ENCODE measurements at regions of chr3 and their contacts with region 1.

Region 1: DNA sequence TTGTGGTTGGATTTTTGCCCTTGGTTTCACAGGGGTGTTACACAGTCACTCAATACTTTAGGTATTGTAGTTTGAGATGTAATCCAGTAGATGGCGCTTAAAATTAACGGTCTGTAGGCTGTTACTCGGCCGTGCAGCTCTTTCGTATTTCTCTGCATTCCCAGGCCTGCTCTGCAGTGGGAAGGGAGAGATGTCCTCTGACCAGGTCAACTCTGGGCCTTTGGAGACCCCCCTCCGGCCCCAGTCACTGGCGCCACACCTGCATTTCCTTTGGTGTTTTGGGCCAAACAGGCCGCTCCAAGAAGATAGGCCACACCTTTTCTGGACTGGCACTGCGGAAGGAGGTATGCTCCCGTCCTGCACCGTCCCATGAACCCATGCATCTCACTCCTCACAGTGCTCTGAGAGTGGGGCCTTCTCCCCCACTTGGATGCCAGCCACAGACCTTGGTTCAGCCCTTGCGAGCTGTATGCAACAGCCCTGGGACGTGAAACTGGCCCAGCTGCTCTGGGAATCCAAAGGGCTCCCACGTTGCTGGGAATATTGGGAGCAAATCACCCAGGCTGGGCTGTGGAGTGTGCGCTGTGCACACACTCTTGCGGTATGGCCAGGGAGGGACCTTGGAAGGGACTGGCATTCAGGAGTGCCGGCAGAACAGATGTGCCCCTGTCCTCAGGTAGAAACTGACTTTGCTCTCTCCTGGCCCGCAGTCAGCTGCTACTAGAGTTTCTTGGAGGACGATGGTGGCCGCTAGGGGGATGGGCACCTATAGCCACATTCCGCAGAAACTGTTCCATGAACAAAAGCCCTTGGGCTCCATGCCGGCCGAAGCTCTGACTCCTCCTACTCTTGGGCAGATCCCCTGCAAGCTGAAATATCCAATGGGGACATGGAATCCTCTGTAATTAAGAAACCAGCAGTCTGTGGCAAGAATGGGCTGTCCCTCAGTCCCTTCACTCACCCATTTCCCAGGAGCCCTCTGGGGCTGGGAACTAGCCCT is 410.5 kb upstream of the CADM2 start:
- DNase-seq: no peak
- H3K4me3 ChIP-seq: no peak overlapping the region
- H3K4me3 Mint-ChIP-seq: peak overlapping the region in 1 of 2 donors; percentile 6
- H3K27ac ChIP-seq: no peak overlapping the region
- H3K27ac Mint-ChIP-seq: no peak overlapping the region
- H3K4me1 ChIP-seq: no peaks in the 10 kb centered on the region
- H3K4me1 Mint-ChIP-seq: no peaks in the 10 kb centered on the region
- H3K27me3 ChIP-seq: no peaks in the 10 kb centered on the region
- H3K27me3 Mint-ChIP-seq: peaks cover 0 to 2% (median 2%) of the 10 kb centered on the region in 3 donors
- CTCF ChIP-seq: peak; percentile 52

Region 2: DNA sequence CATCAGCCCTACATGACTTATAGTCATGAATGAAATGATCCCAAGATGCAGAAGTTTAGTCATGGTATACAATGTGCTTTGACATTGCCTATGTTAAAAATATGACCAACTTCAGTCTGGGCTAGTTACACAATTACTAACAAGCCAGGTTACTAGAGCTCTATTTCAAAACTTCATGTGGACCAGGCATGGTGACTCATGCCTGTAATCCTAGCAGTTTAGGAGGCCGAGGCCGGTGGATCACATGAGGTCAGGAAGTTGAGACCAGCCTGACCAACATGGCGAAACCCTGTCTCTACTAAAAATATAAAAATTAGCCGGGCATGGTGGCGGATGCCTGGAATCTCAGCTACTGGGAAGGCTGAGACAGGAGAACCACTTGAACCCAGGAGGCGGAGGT is 1023.6 kb after region 1 on chr3:
- intact Hi-C with region 1: loop called in 1 of 2 experiments (anchors 5 kb)
- DNase-seq: peak in 2 of 3 donors; percentile 6 to 44
- H3K4me3 ChIP-seq: no peak overlapping the region
- H3K4me3 Mint-ChIP-seq: no peak overlapping the region
- H3K27ac ChIP-seq: no peak overlapping the region
- H3K27ac Mint-ChIP-seq: peak overlapping the region in 1 of 7 donors; percentile 5
- H3K4me1 ChIP-seq: no peaks in the 10 kb centered on the region
- H3K4me1 Mint-ChIP-seq: peaks cover 2% of the 10 kb centered on the region
- H3K27me3 ChIP-seq: no peaks in the 10 kb centered on the region
- H3K27me3 Mint-ChIP-seq: peaks cover 2% of the 10 kb centered on the region in 3 donors
- CTCF ChIP-seq: no peak

Measured in CD14-positive monocyte (primary cell).